Natural killer cell (primary cell): ENCODE measurements at regions of chr6 and their contacts with region 1.

Region 1: DNA sequence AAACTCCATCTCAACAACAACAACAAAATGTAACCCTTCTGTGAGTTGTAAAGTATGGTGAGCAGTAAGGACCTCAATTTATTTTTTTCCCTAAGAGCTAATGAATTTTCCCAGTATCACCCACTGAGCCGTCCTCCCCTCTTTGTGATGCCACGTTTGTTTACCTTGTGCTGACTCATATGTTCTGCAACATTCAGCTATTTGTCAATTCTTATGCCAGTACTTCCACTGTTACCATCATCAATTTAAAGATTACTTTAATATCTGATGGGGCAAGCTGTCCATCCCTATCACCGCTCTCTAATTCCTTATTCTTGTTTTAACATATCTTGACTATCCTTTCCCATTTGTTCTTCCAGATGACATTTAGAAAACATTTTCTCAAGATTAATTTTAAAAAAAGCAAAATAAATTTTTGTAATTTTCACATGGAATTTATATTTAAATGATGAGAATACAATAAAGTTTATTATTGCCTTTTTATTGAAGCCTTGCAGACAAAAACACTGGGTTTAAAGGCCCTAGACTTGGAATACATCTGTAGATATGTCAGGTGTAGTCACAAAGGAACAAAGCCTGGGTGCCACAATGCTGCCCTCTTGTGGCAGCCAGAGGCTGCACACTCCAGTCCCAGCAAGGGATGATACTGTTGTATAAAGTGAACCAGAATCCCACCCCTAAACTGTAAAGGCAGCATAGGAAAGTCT is 37.4 kb downstream of the MAK start:
- DNase-seq: peak; percentile 45 to 78
- ATAC-seq: peak; percentile 87 to 94 (median 88)
- H3K4me3 ChIP-seq: no peak overlapping the region
- H3K4me3 Mint-ChIP-seq: no peak overlapping the region
- H3K27ac ChIP-seq: no peak overlapping the region
- H3K27ac Mint-ChIP-seq: no peak overlapping the region
- H3K4me1 ChIP-seq: no peaks in the 10 kb centered on the region
- H3K4me1 Mint-ChIP-seq: no peaks in the 10 kb centered on the region
- H3K27me3 ChIP-seq: no peaks in the 10 kb centered on the region
- H3K27me3 Mint-ChIP-seq: no peaks in the 10 kb centered on the region
- CTCF ChIP-seq: peak; percentile 98

Region 2: GRCh38 chr6:8969747-8970146 is 1831.2 kb before region 1 on chr6:
- intact Hi-C with region 1: loop called (anchors 10 kb)
- DNase-seq: no peak
- ATAC-seq: no peak
- H3K4me3 ChIP-seq: no peak overlapping the region
- H3K4me3 Mint-ChIP-seq: no peak overlapping the region
- H3K27ac ChIP-seq: no peak overlapping the region
- H3K27ac Mint-ChIP-seq: no peak overlapping the region
- H3K4me1 ChIP-seq: no peaks in the 10 kb centered on the region
- H3K4me1 Mint-ChIP-seq: no peaks in the 10 kb centered on the region
- H3K27me3 ChIP-seq: no peaks in the 10 kb centered on the region
- H3K27me3 Mint-ChIP-seq: no peaks in the 10 kb centered on the region
- CTCF ChIP-seq: no peak

Region 3: GRCh38 chr6:10478187-10479040 is 322.6 kb before region 1 on chr6:
- intact Hi-C with region 1: loop called (anchors 1 kb)
- DNase-seq: peak in 1 of 2 donors; percentile 60
- ATAC-seq: no peak
- H3K4me3 ChIP-seq: no peak overlapping the region
- H3K4me3 Mint-ChIP-seq: no peak overlapping the region
- H3K27ac ChIP-seq: no peak overlapping the region
- H3K27ac Mint-ChIP-seq: no peak overlapping the region
- H3K4me1 ChIP-seq: no peaks in the 10 kb centered on the region
- H3K4me1 Mint-ChIP-seq: no peaks in the 10 kb centered on the region
- H3K27me3 ChIP-seq: no peaks in the 10 kb centered on the region
- H3K27me3 Mint-ChIP-seq: peaks cover 0 to 42% of the 10 kb centered on the region in 2 donors
- CTCF ChIP-seq: peak; percentile 67

Region 4: GRCh38 chr6:10510592-10511367 is 290.2 kb before region 1 on chr6:
- intact Hi-C with region 1: loop called (anchors 1 kb)
- DNase-seq: peak in 1 of 2 donors; percentile 63
- ATAC-seq: peak; percentile 74 to 84 (median 83)
- H3K4me3 ChIP-seq: no peak overlapping the region
- H3K4me3 Mint-ChIP-seq: no peak overlapping the region
- H3K27ac ChIP-seq: no peak overlapping the region
- H3K27ac Mint-ChIP-seq: no peak overlapping the region
- H3K4me1 ChIP-seq: no peaks in the 10 kb centered on the region
- H3K4me1 Mint-ChIP-seq: peaks cover 5 to 11% of the 10 kb centered on the region in 2 donors
- H3K27me3 ChIP-seq: no peaks in the 10 kb centered on the region
- H3K27me3 Mint-ChIP-seq: peaks cover 10 to 11% of the 10 kb centered on the region in 2 donors
- CTCF ChIP-seq: peak; percentile 40

Region 5: GRCh38 chr6:10779076-10779475 is 21.9 kb before region 1 on chr6:
- intact Hi-C with region 1: no loop called
- DNase-seq: no peak
- ATAC-seq: no peak
- H3K4me3 ChIP-seq: no peak overlapping the region
- H3K4me3 Mint-ChIP-seq: no peak overlapping the region
- H3K27ac ChIP-seq: no peak overlapping the region
- H3K27ac Mint-ChIP-seq: no peak overlapping the region
- H3K4me1 ChIP-seq: no peaks in the 10 kb centered on the region
- H3K4me1 Mint-ChIP-seq: no peaks in the 10 kb centered on the region
- H3K27me3 ChIP-seq: no peaks in the 10 kb centered on the region
- H3K27me3 Mint-ChIP-seq: no peaks in the 10 kb centered on the region
- CTCF ChIP-seq: no peak

Region 6: DNA sequence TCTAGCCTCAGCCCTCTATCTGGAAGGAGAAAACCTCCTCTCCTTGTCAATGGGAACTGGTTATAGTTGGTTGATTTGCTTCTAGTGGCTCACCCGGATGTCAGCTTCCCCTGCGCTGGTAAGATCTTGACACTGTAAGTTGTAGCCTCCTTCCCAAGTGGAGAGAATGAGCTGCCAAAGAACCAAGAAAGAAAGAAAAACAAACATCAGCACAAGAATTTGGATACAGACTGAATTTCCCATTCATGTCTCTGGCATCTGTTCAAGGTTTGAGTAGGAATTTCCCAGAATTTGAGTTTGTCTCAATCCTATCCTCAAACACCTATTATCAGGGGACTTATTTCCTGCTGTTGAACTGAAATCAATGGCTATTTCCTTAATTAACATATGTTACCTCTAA is 199.0 kb after region 1 on chr6:
- intact Hi-C with region 1: no loop called
- DNase-seq: no peak
- ATAC-seq: no peak
- H3K4me3 ChIP-seq: no peak overlapping the region
- H3K4me3 Mint-ChIP-seq: no peak overlapping the region
- H3K27ac ChIP-seq: no peak overlapping the region
- H3K27ac Mint-ChIP-seq: no peak overlapping the region
- H3K4me1 ChIP-seq: no peaks in the 10 kb centered on the region
- H3K4me1 Mint-ChIP-seq: no peaks in the 10 kb centered on the region
- H3K27me3 ChIP-seq: no peaks in the 10 kb centered on the region
- H3K27me3 Mint-ChIP-seq: peaks cover 14 to 25% of the 10 kb centered on the region in 2 donors
- CTCF ChIP-seq: no peak